Mammary epithelial cell (primary cell): ENCODE measurements at regions of chr6 and their contacts with region 1.

Region 1: GRCh38 chr6:117346142-117346930 is 79.4 kb downstream of the ROS1 start:
- DNase-seq: peak; percentile 9
- H3K4me3 ChIP-seq: no peak overlapping the region
- H3K27ac ChIP-seq: no peak overlapping the region
- H3K4me1 ChIP-seq: no peaks in the 10 kb centered on the region
- H3K27me3 ChIP-seq: no peaks in the 10 kb centered on the region
- CTCF ChIP-seq: peak; percentile 42 to 45

Region 2: GRCh38 chr6:117547688-117548621 is 201.6 kb after region 1 on chr6:
- CTCF ChIA-PET with region 1: no interaction called
- dilution Hi-C with region 1: no loop called
- in situ Hi-C with region 1: loop called in 1 of 2 experiments (anchors 5 kb)
- intact Hi-C with region 1: no loop called
- DNase-seq: no peak
- H3K4me3 ChIP-seq: peak overlapping the region in 1 of 3 experiments; percentile 17
- H3K27ac ChIP-seq: peak overlapping the region; percentile 6
- H3K4me1 ChIP-seq: peaks cover 48% of the 10 kb centered on the region
- H3K27me3 ChIP-seq: no peaks in the 10 kb centered on the region
- CTCF ChIP-seq: no peak

Region 3: GRCh38 chr6:117829594-117830319 is 483.4 kb after region 1 on chr6:
- CTCF ChIA-PET with region 1: no interaction called
- dilution Hi-C with region 1: no loop called
- in situ Hi-C with region 1: loop called (anchors 5 to 25 kb)
- intact Hi-C with region 1: loop called (anchors 1 kb)
- DNase-seq: peak; percentile 33
- H3K4me3 ChIP-seq: peak overlapping the region; percentile 42 to 55 (median 48)
- H3K27ac ChIP-seq: no peak overlapping the region
- H3K4me1 ChIP-seq: no peaks in the 10 kb centered on the region
- H3K27me3 ChIP-seq: no peaks in the 10 kb centered on the region
- CTCF ChIP-seq: peak; percentile 27 to 69